Right ventricle myocardium inferior (tissue), 1 donor: ENCODE measurements at regions of chr9 and their contacts with region 1.

Region 1: DNA sequence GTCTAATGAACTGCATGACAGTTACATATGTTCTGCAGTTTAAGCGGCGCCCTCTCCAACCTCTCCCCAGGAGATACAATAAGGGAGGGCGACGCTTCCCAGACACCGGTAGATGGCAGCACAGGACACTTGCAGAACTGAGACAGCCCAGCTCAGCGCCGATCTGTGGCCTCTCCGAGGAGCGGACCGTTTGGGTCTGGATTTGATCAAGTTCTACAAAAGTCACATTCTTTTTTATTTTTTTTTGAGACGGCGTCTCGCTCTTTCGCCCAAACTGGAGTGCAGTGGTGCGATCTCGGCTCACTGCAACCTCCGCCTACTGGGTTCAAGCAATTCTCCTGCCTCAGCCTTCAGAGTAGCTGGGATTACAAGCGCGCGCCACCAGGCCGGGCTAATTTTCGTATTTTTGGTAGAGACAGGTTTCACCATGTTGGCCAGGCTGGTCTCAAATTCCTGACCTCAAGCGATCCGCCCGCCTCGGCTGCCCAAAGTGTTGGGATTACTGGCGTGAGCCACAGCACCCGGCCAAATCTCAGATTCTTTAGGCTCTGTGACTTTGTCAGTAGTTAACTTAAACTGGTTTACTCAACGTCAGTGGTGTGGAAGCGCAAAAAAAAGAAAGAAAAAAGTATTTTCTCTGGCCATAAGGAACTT is 1.4 kb upstream of the ATOSB start:
- DNase-seq: peak; percentile 94
- ATAC-seq: peak; percentile 83

Region 2: GRCh38 chr9:35258676-35259474 is 141.8 kb after region 1 on chr9:
- intact Hi-C with region 1: loop called (anchors 1 kb)
- DNase-seq: peak; percentile 83
- ATAC-seq: peak; percentile 54

Region 3: GRCh38 chr9:35293378-35293964 is 176.4 kb after region 1 on chr9:
- intact Hi-C with region 1: no loop called
- DNase-seq: no peak
- ATAC-seq: no peak

Region 4: DNA sequence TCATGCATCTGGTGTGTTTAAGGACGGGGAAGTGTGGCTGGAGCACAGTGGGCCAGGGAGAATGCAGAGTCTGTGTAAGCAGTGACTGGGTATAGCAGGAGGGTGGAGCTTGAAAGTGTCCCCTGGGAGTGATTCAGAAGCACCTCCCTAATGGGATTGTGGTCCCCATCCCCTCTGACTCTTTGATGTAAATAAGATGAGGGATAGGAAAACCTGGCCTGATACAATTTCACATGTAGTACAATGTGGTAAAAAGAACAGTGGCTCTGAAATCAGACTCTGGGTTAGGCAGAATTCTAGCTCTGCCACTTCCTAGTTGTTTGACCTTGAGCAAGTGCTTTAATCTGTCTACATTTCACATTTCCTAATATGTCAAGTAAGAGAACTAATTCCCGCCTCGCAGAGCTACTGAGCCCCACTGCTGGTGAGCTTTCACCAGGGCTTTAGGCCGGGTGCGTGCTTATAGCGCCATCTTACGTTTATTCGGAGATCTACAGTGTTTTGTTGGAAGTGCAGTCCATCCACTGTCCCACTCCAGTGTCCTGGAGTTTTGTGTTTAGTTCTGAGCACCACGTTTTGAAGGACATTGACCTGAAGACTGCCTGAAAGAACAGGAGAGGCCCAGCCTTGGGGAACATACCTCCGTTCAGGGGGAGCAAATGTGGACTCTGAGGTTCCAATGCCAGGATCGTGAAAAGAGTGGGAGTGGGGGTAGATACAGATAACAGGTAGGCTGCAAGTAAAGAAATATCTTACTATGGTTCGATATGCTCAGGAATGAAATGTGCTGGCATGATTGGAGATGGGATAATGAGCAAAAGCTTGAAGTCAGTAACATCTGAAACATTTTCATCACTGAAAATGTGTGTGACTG is 436.9 kb after region 1 on chr9:
- intact Hi-C with region 1: loop called (anchors 10 kb)
- DNase-seq: no peak
- ATAC-seq: peak; percentile 90